SK-N-SH (cell line): ENCODE measurements at regions of chr11 and their contacts with region 1.

Region 1: GRCh38 chr11:64448599-64449556 is 89.9 kb downstream of the RPS6KA4 start:
- DNase-seq: peak; percentile 94
- H3K4me3 ChIP-seq: peak overlapping the region; percentile 31 to 43
- H3K27ac ChIP-seq: no peak overlapping the region; a peak in 1 of 4 replicates
- H3K4me1 ChIP-seq: peaks cover 0 to 16% of the 10 kb centered on the region in 2 experiments; a peak in 1 of 4 replicates
- H3K27me3 ChIP-seq: peaks cover 12% of the 10 kb centered on the region; the same call in 1 of the 2 replicates
- CTCF ChIP-seq: peak; percentile 81
- EP300 ChIP-seq: no peak
- RAD21 ChIP-seq: peak; percentile 70

Region 2: GRCh38 chr11:64409707-64410403 is 39.0 kb before region 1 on chr11:
- CTCF ChIA-PET with region 1: interaction called, 10 read pairs
- POLR2A ChIA-PET with region 1: no interaction called
- DNase-seq: no peak
- H3K4me3 ChIP-seq: no peak overlapping the region
- H3K27ac ChIP-seq: no peak overlapping the region
- H3K4me1 ChIP-seq: peaks cover 0 to 8% of the 10 kb centered on the region in 2 experiments; a peak in 1 of 4 replicates
- H3K27me3 ChIP-seq: no peaks in the 10 kb centered on the region
- CTCF ChIP-seq: no peak
- EP300 ChIP-seq: no peak
- RAD21 ChIP-seq: no peak

Region 3: DNA sequence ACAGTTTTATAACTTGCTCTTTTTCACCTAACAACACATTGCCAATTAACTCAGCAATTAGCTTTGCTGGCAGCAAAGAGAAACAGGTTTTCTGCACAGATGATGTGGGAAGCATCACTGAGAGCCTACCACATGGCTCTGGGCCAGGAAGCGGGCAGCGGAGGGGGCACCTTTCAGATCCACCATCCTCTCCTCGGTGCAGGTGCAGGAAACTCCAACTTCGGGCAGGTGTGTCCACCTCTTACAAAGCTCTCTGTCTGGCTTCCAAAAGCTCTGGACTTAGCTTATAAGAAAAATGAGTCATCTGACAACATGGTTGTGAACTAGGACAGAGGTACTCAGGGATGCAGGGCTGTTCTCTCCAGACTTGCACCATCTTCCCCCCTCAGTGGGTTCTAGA is 12.9 kb before region 1 on chr11:
- CTCF ChIA-PET with region 1: interaction called, 71 read pairs
- POLR2A ChIA-PET with region 1: no interaction called
- DNase-seq: no peak
- H3K4me3 ChIP-seq: no peak overlapping the region
- H3K27ac ChIP-seq: no peak overlapping the region
- H3K4me1 ChIP-seq: no peaks in the 10 kb centered on the region; a peak in 1 of 4 replicates
- H3K27me3 ChIP-seq: peaks cover 5% of the 10 kb centered on the region; the same call in 1 of the 2 replicates
- CTCF ChIP-seq: no peak
- EP300 ChIP-seq: no peak
- RAD21 ChIP-seq: no peak

Region 4: GRCh38 chr11:64500176-64501013 is 51.5 kb after region 1 on chr11:
- CTCF ChIA-PET with region 1: interaction called, 19 read pairs
- POLR2A ChIA-PET with region 1: no interaction called
- DNase-seq: no peak
- H3K4me3 ChIP-seq: no peak overlapping the region
- H3K27ac ChIP-seq: no peak overlapping the region
- H3K4me1 ChIP-seq: peaks cover 0 to 3% of the 10 kb centered on the region in 2 experiments; a peak in 1 of 4 replicates
- H3K27me3 ChIP-seq: no peaks in the 10 kb centered on the region
- CTCF ChIP-seq: no peak
- EP300 ChIP-seq: no peak
- RAD21 ChIP-seq: no peak

Region 5: DNA sequence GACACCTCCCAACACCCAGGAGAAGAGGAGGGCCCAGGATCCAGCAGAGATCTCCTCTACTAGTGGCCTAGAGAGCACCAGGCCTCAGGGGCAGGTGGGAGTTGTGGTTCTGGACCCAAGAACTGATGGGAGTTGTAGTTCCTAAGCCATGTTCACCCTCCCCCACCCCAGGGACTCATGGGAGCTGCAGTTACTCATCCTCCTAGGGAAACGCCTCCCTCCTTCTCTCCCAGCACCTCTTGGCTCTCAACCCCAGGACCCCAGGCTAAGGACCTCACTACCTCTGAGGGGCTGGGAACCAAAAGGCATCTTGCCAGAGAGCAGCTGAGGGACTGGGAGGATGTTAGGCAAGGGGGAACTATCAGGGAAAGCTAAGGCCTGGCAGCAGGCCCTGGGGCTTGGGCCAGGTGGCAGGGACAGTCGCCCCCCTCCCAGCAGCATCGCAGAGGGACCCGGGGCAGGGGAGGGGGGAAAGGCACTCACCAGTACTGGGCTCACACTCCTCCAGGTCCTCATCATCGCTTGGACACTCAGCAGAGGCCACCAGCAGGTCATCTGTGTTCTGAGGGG is 171.0 kb after region 1 on chr11:
- CTCF ChIA-PET with region 1: interaction called, 10 read pairs
- POLR2A ChIA-PET with region 1: no interaction called
- DNase-seq: peak; percentile 70
- H3K4me3 ChIP-seq: no peak overlapping the region
- H3K27ac ChIP-seq: peak overlapping the region in 1 of 2 experiments; percentile 95; a peak in 2 of 4 replicates
- H3K4me1 ChIP-seq: peaks cover 0 to 43% of the 10 kb centered on the region in 2 experiments; a peak in 2 of 4 replicates
- H3K27me3 ChIP-seq: 0 out of 2 replicates have a peak, but pooled peaks cover 10% of the 10 kb centered on the region
- CTCF ChIP-seq: no peak
- EP300 ChIP-seq: no peak
- RAD21 ChIP-seq: no peak

Region 6: DNA sequence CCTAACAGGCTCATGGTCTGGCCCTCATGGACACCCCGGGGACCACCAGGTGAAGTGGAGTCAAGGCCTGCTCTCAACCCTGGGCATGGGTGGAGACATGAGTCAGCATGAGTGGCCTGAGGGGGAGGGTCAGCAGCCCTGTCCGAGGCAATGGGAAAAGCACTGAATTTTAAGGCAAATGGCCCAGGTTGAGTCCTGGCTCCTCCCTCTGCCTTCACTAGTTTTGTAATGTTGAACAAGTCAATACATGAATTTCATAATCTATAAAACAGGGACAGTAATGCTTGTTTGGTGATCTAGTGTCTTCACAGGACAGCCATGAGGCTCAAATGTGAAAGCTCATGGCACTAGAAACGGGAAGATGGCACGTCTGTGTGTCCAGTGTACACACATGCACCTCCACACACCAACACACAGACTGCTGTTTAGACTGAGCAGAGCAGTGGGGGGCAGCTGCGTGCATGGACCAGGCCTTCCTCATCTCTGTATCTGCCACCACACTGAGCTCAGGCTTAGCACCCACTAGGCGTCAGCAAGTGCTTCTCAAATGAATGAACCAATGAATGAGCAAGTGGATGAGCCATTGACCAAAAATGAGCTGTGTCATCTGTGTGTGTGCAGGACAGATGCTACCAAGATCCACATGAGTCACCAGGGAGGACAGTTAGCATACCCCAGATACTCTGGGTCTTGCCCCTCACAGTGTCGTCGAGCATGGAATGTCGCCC is 210.7 kb after region 1 on chr11:
- CTCF ChIA-PET with region 1: interaction called, 14 read pairs
- POLR2A ChIA-PET with region 1: no interaction called
- DNase-seq: no peak
- H3K4me3 ChIP-seq: no peak overlapping the region
- H3K27ac ChIP-seq: no peak overlapping the region
- H3K4me1 ChIP-seq: peaks cover 0 to 5% of the 10 kb centered on the region in 2 experiments; a peak in 2 of 4 replicates
- H3K27me3 ChIP-seq: no peaks in the 10 kb centered on the region
- CTCF ChIP-seq: no peak
- EP300 ChIP-seq: no peak
- RAD21 ChIP-seq: no peak

Region 7: DNA sequence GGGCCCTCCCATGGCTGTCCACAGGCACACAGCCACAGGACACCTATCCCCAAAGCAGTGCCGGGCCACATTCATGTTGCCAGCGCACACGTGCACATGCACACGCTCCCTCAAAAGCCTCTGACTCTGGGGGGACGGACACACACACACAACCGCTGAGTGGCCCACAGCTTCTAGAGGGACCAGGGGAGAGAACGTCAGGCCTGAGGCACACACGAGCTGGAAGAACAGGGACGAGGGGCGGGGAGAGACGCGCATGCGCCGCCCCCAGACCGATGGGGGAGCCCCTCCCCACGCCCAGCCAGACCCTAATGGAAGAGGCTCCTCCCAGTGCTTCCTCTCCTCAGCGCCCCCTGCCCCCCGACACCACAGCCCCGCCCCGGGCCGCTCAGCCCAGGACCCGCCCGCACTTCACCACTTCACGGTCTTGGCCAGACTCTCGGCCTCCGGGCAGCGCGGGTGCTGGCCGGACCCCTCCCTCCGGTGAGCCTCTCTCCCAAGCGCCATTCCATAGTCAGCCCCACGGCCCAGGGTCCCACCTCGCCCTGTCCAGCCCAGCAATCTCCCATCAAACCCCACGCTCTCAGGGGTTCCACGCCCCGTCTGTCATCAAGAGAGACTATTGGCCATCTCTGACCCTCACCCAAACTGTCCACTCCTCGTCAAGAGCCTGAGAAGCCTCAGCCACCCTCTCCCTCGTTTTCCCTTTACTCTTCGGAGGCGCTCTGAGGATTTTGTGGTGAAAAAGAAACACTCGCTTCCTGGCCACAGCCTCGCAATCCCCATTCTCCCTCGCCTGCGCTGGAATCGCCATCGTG is 262.5 kb after region 1 on chr11:
- CTCF ChIA-PET with region 1: no interaction called
- POLR2A ChIA-PET with region 1: no interaction called
- DNase-seq: peak; percentile 70
- H3K4me3 ChIP-seq: no peak overlapping the region
- H3K27ac ChIP-seq: peak overlapping the region in 1 of 2 experiments; percentile 40; a peak in 1 of 4 replicates
- H3K4me1 ChIP-seq: peaks cover 0 to 25% of the 10 kb centered on the region in 2 experiments; a peak in 3 of 4 replicates
- H3K27me3 ChIP-seq: no peaks in the 10 kb centered on the region
- CTCF ChIP-seq: no peak
- EP300 ChIP-seq: no peak
- RAD21 ChIP-seq: no peak

Region 8: GRCh38 chr11:64742889-64743590 is 294.2 kb after region 1 on chr11:
- CTCF ChIA-PET with region 1: no interaction called
- POLR2A ChIA-PET with region 1: no interaction called
- DNase-seq: peak; percentile 93
- H3K4me3 ChIP-seq: peak overlapping the region; percentile 49 to 50
- H3K27ac ChIP-seq: no peak overlapping the region
- H3K4me1 ChIP-seq: peaks cover 16 to 17% of the 10 kb centered on the region in 2 experiments; a peak in 2 of 4 replicates
- H3K27me3 ChIP-seq: peaks cover 8% of the 10 kb centered on the region; the same call in 1 of the 2 replicates
- CTCF ChIP-seq: peak; percentile 73
- EP300 ChIP-seq: no peak
- RAD21 ChIP-seq: peak; percentile 50